ENCODE measurements at regions of chr11 and their contacts with region 1.

Region 1: DNA sequence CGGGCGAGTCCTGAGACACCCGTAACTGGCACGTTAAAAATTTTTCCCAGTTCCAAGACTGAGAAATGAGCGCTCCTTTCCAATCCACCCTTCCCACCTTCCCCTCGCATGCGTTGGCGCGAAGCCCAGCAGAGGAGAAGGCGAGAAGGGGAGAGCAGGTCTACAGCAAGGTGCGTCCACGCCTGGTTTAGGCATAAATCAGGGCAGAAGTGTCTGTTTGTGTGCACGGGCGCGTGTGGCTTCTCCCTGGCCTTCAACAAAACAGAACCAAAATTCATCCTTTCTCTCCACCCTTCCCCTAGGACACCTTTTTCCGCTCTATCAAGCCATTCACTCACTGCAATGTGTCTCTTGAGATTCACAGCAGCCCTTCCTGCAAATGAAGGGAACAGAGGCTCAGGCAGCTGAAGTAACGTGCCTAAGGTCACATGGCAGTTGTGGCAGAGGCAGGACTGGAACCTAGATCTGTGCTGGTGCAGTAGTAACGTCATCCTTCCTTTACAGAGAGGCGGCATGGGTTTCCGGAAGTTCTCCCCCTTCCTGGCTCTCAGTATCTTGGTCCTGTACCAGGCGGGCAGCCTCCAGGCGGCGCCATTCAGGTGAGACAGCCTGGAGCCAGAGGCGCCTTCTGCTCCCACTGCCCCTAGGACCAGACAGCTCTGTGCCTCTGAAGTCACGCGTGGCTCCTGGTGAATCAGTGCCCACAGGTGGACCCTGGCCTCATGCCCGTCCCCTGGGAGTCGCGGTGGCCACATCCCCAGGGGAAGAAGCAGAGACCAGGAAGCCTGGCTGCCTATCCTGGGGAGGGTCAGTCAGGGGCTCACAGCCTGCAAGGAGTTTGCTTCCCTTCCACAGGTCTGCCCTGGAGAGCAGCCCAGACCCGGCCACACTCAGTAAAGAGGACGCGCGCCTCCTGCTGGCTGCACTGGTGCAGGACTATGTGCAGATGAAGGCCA is 1.1 kb downstream of the CALCB start:
- DNase-seq: peak; percentile 66 to 86 (median 75)
- ATAC-seq: peak; percentile 88
- H3K4me3 ChIP-seq: peak overlapping the region; percentile 41
- H3K4me3 Mint-ChIP-seq: peak overlapping the region; percentile 76 to 95 (median 86)
- H3K27ac ChIP-seq: no peak overlapping the region
- H3K27ac Mint-ChIP-seq: peak overlapping the region in 4 of 9 donors; percentile 29 to 86 (median 56)
- H3K4me1 ChIP-seq: peaks cover 6 to 14% of the 10 kb centered on the region in 2 donors
- H3K4me1 Mint-ChIP-seq: peaks cover 12 to 23% (median 17%) of the 10 kb centered on the region in 7 donors
- H3K27me3 ChIP-seq: peaks cover 4% of the 10 kb centered on the region in 2 donors
- H3K27me3 Mint-ChIP-seq: peaks cover 9 to 47% (median 14%) of the 10 kb centered on the region in 5 donors

Region 2: DNA sequence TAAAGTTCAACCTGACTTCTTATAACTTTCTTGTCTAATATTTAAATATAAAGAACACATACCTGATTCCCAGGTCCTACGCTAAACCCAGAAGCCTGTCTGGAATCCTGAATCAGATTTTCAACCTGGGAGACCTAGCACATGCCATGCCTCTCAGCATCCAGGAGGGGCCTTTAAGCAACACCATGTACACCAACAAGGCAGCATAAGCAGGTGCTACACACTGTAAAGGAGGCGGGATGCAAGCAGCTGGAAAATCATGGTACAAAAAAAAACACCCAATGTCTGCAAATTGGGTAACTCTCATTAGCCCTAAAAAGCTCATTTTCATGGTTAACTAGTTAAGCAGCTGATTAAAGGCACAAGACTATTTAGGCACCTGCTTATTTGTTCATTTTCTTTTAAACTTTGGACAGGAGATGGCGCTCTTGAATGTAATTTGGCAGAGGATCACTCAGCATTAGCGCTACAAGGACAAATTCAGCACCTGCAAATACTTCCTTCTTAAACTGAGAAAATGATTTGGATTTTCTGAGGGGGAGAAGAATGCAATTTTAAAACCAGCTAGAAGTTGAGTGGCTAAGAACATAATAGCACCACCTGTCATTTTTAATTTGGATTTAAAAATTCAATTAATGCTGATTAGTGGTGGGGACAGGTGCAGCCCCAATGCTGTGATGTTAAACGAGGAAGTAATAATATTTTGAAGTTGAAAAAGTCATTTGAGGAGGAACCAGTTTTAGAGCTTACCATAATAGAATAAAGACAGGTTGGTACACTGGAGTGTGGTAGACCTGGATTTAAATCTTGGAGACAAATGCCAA is 1302.0 kb before region 1 on chr11:
- CTCF ChIA-PET with region 1: no interaction called
- POLR2A ChIA-PET with region 1: no interaction called
- intact Hi-C with region 1: loop called in 1 of 2 experiments (anchors 2 kb)
- DNase-seq: peak in 7 of 9 donors; percentile 61 to 80 (median 75)
- ATAC-seq: peak; percentile 79
- H3K4me3 ChIP-seq: no peak overlapping the region
- H3K4me3 Mint-ChIP-seq: no peak overlapping the region
- H3K27ac ChIP-seq: no peak overlapping the region
- H3K27ac Mint-ChIP-seq: no peak overlapping the region
- H3K4me1 ChIP-seq: no peaks in the 10 kb centered on the region
- H3K4me1 Mint-ChIP-seq: peaks cover 0 to 9% (median 5%) of the 10 kb centered on the region in 7 donors
- H3K27me3 ChIP-seq: no peaks in the 10 kb centered on the region
- H3K27me3 Mint-ChIP-seq: peaks cover 0 to 44% (median 4%) of the 10 kb centered on the region in 5 donors

Region 3: DNA sequence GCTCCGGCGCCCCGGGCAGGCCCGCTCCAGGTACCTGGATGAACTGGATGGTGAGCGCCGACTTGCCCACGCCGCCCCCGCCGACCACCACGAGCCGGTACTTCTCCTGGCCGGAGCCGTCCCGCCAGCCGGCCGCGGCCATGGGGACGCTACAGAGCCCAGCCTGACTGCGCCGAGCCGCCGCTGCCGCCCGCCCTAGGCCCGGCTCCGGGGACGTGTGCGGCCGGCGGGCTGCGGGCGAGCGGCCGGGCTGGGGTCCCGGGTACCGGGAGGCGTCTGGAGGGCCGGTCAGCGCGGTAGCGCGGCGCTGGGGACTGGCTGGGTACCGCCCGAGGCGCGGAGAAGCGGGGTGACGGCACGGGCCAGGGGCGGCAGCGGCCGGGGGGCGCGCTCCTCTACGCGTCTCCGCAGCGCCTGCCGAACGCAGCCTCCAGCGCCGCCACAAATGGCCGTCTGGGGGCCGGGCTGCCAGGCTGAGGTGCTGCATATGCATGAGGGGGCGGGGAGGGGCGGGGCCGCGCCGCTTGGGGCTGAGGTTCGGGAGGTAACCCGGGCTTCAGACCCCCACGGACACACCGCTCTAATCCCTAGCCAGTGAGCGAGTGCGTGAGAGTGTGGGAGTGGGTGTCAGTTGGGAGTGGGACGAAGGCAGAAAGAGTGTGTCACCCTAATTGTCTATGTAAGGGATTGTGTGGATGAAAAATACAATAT is 715.6 kb before region 1 on chr11 and contains the start of gene RRAS2:
- CTCF ChIA-PET with region 1: interaction called, 4 read pairs
- POLR2A ChIA-PET with region 1: no interaction called
- intact Hi-C with region 1: loop called in 1 of 2 experiments (anchors 1 kb)
- DNase-seq: peak; percentile 67 to 81 (median 78)
- ATAC-seq: peak; percentile 96
- H3K4me3 ChIP-seq: peak within 1 kb of the TSS; percentile 61
- H3K4me3 Mint-ChIP-seq: peak within 1 kb of the TSS; percentile 91 to 98 (median 95)
- H3K27ac ChIP-seq: peak within 1 kb of the TSS; percentile 72
- H3K27ac Mint-ChIP-seq: peak within 1 kb of the TSS; percentile 66 to 93 (median 86)
- H3K4me1 ChIP-seq: peaks cover 7 to 8% of the 10 kb centered on the region in 2 donors
- H3K4me1 Mint-ChIP-seq: peaks cover 25 to 55% (median 30%) of the 10 kb centered on the region in 7 donors
- H3K27me3 ChIP-seq: no peaks in the 10 kb centered on the region
- H3K27me3 Mint-ChIP-seq: peaks cover 0 to 6% (median 0%) of the 10 kb centered on the region in 5 donors
- total RNA-seq, gene RRAS2: 12.6 to 55.3 (median 22.2) TPM

Region 4: GRCh38 chr11:14519917-14520746 is 554.4 kb before region 1 on chr11 and contains the start of gene PSMA1:
- CTCF ChIA-PET with region 1: no interaction called
- POLR2A ChIA-PET with region 1: no interaction called
- intact Hi-C with region 1: loop called (anchors 2 kb)
- DNase-seq: peak; percentile 72 to 95 (median 89)
- ATAC-seq: peak; percentile 96
- H3K4me3 ChIP-seq: peak within 1 kb of the TSS; percentile 70
- H3K4me3 Mint-ChIP-seq: peak within 1 kb of the TSS; percentile 86 to 99 (median 97)
- H3K27ac ChIP-seq: peak within 1 kb of the TSS; percentile 96
- H3K27ac Mint-ChIP-seq: peak within 1 kb of the TSS; percentile 93 to 99 (median 96)
- H3K4me1 ChIP-seq: peaks cover 14 to 16% of the 10 kb centered on the region in 2 donors
- H3K4me1 Mint-ChIP-seq: peaks cover 15 to 43% (median 38%) of the 10 kb centered on the region in 7 donors
- H3K27me3 ChIP-seq: no peaks in the 10 kb centered on the region
- H3K27me3 Mint-ChIP-seq: no peaks in the 10 kb centered on the region
- total RNA-seq, gene PSMA1: 103 to 253 (median 120) TPM

Region 5: DNA sequence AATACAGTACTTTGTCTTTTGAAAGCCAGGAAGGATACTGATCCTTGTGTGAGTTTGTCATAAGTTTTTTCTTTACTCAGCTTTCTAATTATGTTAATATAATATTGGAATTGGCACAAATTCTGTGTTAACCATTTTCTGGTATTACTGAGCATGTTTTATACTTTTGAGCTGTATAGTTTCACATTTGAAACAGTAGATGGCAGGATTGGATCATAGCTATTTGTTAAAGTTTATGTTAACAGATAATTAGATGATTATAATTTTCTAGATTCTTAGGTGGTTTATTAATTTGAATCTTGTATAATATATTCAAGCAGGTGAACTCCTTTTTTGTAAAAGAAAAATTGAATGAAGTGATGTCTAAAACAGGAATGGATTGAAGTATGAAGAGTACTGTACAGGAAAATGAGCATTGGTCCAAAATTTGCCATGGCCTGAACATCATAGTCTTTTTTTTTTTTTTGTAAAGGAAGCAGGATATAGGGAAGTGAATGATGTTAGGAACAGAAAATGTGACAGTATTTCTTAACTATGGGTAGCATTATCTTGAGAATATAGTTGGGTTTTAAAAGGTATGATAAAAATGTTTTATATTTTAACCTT is 284.5 kb before region 1 on chr11:
- CTCF ChIA-PET with region 1: interaction called, 4 read pairs
- POLR2A ChIA-PET with region 1: no interaction called
- intact Hi-C with region 1: loop called (anchors 1 to 2 kb)
- DNase-seq: peak in 4 of 9 donors; percentile 19 to 37 (median 36)
- ATAC-seq: peak; percentile 42
- H3K4me3 ChIP-seq: no peak overlapping the region
- H3K4me3 Mint-ChIP-seq: no peak overlapping the region
- H3K27ac ChIP-seq: no peak overlapping the region
- H3K27ac Mint-ChIP-seq: peak overlapping the region in 7 of 9 donors; percentile 2 to 74 (median 51)
- H3K4me1 ChIP-seq: no peaks in the 10 kb centered on the region
- H3K4me1 Mint-ChIP-seq: peaks cover 4 to 39% (median 17%) of the 10 kb centered on the region in 7 donors
- H3K27me3 ChIP-seq: no peaks in the 10 kb centered on the region
- H3K27me3 Mint-ChIP-seq: no peaks in the 10 kb centered on the region